KBM-7 (cell line): ENCODE measurements at regions of chr2 and their contacts with region 1.

Region 1: DNA sequence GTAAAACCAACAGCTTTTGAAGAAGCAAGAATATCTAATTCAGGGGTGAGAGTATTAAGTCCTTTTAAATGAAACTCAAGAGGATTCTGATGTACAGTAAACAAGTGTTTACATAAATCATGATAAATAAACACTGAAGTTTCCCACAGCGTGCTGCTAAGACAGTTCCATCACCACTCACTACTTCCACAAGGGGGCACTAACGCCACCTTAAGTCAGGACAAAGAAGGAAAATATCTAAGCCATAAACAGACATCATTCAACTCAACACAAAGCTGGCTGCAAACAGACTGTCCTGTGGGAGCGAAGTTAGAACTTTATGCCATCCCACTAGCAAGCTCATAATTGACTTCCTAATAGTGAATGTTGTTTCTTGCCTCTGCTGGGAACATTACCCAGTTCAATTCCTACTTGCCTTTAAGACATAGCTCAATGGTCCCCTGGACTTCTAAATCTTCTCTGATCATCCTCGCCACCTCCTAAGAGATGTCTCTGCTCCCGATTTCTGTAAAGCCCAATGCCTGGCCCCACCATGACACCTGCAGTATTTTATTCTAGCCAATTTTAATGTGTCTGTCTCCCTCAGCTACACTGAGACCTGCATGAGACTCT is 36.5 kb downstream of the MRPL44 start:
- DNase-seq: peak; percentile 77

Region 2: GRCh38 chr2:224268441-224268840 is 274.7 kb after region 1 on chr2:
- in situ Hi-C with region 1: loop called (anchors 25 kb)
- DNase-seq: no peak